Psoas muscle (tissue), 8 donors: ENCODE measurements at regions of chr6 and their contacts with region 1.

Region 1: GRCh38 chr6:20212392-20213217 is at the start of gene MBOAT1:
- DNase-seq: peak; percentile 90 to 94
- ATAC-seq: peak; percentile 93 to 97 (median 96)
- H3K4me3 ChIP-seq: peak within 1 kb of the TSS; percentile 79
- H3K27ac ChIP-seq: peak within 1 kb of the TSS; percentile 71
- H3K4me1 ChIP-seq: peaks cover 6% of the 10 kb centered on the region
- H3K27me3 ChIP-seq: no peaks in the 10 kb centered on the region
- CTCF ChIP-seq: no peak
- total RNA-seq, gene MBOAT1: 0.84 to 2.7 (median 0.94) TPM

Region 2: GRCh38 chr6:20169119-20169557 is 43.5 kb before region 1 on chr6:
- intact Hi-C with region 1: loop called in 1 of 2 experiments (anchors 5 kb)
- DNase-seq: no peak
- ATAC-seq: peak in 1 of 4 donors; percentile 79
- H3K4me3 ChIP-seq: no peak overlapping the region
- H3K27ac ChIP-seq: no peak overlapping the region
- H3K4me1 ChIP-seq: no peaks in the 10 kb centered on the region
- H3K27me3 ChIP-seq: no peaks in the 10 kb centered on the region
- CTCF ChIP-seq: no peak

Region 3: DNA sequence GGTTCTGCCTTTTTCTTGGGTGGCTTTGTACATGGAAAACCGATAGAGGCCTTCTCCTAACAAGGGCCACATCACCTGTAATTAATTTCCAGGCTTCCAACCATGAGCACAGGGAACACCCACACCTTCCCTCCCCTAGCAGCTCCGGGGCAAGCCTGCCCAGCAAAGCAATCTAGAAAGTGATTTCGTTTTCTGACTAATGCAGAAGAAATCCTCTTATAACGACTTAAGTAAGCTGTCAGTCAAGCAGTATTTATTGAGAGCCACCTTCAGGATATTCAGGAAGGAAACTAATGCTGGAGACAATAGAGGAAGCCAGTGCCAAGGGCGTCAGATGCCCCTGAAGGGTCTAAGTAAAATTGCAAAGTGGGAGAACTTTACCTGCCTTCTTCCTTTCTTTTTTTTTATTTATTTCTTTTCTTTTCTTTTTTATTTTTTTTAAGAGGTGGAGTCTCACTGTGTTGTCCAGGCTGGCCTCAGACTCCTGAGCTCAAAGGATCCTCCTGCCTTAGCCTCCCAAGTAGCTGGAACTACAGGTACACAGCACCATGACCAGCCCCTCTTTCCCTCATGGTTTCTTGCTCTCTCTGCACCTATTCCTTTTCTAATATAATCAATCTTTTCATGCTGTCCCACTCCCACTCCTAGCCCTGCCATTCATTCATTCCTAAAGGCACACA is 67.1 kb after region 1 on chr6:
- intact Hi-C with region 1: no loop called
- DNase-seq: no peak
- ATAC-seq: no peak
- H3K4me3 ChIP-seq: no peak overlapping the region
- H3K27ac ChIP-seq: no peak overlapping the region
- H3K4me1 ChIP-seq: no peaks in the 10 kb centered on the region
- H3K27me3 ChIP-seq: peaks cover 0 to 2% (median 0%) of the 10 kb centered on the region in 3 donors
- CTCF ChIP-seq: no peak